ENCODE measurements at regions of chr3 and their contacts with region 1.

Region 1: DNA sequence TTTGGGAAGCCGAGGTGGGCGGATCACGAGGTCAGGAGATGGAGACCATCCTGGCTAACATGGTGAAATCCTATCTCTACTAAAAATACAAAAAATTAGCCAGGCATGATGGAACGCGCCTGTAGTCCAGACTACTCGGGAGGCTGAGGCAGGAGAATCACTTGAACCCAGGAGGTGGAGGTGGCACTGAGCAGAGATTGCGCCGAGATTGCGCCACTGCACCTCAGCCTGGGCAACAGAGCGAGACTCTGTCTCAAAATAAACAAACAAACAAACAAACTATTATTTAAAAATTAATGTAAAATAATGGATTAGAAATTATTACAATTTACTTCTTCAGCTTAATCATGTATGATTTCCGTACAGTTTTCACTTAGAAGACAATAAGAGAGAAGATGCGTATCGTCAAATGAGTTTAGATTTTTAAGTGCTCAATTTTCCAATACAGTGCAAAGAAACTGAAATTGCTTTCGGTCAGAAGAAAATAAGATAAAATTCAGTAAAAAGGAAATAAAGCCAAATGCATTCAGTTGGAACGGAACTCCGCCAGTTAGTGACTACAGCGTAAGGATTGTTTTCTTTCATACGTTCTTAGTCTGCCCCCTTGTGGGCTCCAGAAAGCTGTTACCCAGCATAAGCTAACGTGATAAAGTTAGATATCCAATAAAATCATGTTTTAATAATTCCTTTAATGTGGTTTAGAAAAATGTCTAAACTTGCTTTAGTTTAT is 24.8 kb downstream of the AADAC start:
- DNase-seq: peak; percentile 49 to 60
- H3K4me3 ChIP-seq: no peak overlapping the region
- H3K4me3 Mint-ChIP-seq: no peak overlapping the region
- H3K27ac Mint-ChIP-seq: no peak overlapping the region
- H3K4me1 ChIP-seq: peaks cover 20% of the 10 kb centered on the region
- H3K4me1 Mint-ChIP-seq: peaks cover 15% of the 10 kb centered on the region
- H3K27me3 ChIP-seq: no peaks in the 10 kb centered on the region
- H3K27me3 Mint-ChIP-seq: no peaks in the 10 kb centered on the region
- CTCF ChIP-seq: peak; percentile 66 to 79

Region 2: GRCh38 chr3:151168269-151169094 is 670.3 kb before region 1 on chr3:
- CTCF ChIA-PET with region 1: no interaction called
- POLR2A ChIA-PET with region 1: no interaction called
- intact Hi-C with region 1: loop called (anchors 5 kb)
- DNase-seq: peak; percentile 75 to 84
- H3K4me3 ChIP-seq: no peak overlapping the region
- H3K4me3 Mint-ChIP-seq: no peak overlapping the region
- H3K27ac Mint-ChIP-seq: no peak overlapping the region
- H3K4me1 ChIP-seq: no peaks in the 10 kb centered on the region
- H3K4me1 Mint-ChIP-seq: peaks cover 6% of the 10 kb centered on the region
- H3K27me3 ChIP-seq: no peaks in the 10 kb centered on the region
- H3K27me3 Mint-ChIP-seq: no peaks in the 10 kb centered on the region
- CTCF ChIP-seq: peak; percentile 89 to 94

Region 3: DNA sequence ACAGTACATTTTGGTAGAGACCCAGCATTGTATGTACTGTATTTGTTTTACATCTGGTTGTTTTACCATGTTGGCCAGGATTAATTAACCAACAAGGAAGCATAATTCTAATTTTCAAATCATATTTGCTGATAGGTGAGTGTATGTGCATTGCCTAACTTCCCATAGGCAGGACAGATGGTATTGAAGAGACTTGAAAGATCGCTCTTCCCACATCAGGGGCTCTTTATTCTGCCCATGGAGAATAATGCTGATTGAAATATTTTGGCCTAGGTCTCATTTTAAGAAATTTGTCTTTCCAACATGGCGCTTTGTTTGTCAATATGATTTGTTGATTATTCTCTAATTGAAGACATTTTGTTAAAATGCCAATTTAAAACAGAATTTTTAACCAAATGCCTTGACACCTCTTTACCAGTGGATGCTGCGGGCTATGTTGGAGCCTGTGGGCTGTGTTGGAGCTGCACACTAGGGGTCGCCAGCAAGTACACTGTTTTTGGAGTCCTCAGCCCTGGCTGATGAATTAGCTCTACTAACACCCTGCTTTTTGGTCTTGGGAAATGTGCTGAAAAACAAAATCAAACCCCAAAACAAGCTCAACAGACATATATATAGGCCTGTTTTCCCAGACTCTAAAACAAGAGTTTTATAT is 459.5 kb before region 1 on chr3:
- CTCF ChIA-PET with region 1: interaction called, 3 read pairs
- POLR2A ChIA-PET with region 1: no interaction called
- intact Hi-C with region 1: loop called (anchors 1 kb)
- DNase-seq: peak; percentile 36 to 50
- H3K4me3 ChIP-seq: no peak overlapping the region
- H3K4me3 Mint-ChIP-seq: no peak overlapping the region
- H3K27ac Mint-ChIP-seq: no peak overlapping the region
- H3K4me1 ChIP-seq: no peaks in the 10 kb centered on the region
- H3K4me1 Mint-ChIP-seq: peaks cover 6% of the 10 kb centered on the region
- H3K27me3 ChIP-seq: no peaks in the 10 kb centered on the region
- H3K27me3 Mint-ChIP-seq: no peaks in the 10 kb centered on the region
- CTCF ChIP-seq: peak; percentile 54 to 85

Region 4: DNA sequence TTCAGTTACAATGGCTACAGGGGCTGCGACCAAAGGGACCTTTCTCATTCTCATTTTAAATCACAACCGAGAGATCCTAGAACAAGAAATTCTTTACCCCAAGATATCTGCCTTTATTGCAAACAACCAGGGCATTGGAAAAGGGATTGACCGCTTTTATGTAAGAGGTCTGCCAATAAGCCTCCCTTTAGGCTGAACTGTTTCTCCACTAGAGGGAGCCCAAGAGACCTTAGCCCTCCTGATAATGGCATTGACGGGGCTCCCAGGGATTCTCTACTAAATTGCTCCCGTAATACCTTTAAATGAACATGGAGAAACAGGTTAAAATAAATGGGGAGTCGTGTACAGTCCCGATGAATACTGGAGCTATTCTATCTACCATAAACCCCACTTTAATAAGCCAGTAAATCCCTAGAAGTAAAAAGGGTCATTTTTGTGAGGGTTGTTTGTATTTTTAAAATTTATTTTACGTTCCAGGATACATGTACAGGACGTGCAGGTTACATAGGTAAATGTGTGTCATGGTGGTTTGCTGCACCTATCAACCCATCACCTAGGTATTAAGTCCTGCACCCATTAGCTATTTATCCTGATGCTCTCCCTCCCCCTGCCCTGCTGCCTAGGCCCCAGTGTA is 370.3 kb before region 1 on chr3:
- CTCF ChIA-PET with region 1: interaction called, 8 read pairs
- POLR2A ChIA-PET with region 1: no interaction called
- intact Hi-C with region 1: loop called (anchors 1 kb)
- DNase-seq: peak; percentile 54 to 78
- H3K4me3 ChIP-seq: no peak overlapping the region
- H3K4me3 Mint-ChIP-seq: no peak overlapping the region
- H3K27ac Mint-ChIP-seq: no peak overlapping the region
- H3K4me1 ChIP-seq: no peaks in the 10 kb centered on the region
- H3K4me1 Mint-ChIP-seq: no peaks in the 10 kb centered on the region
- H3K27me3 ChIP-seq: no peaks in the 10 kb centered on the region
- H3K27me3 Mint-ChIP-seq: no peaks in the 10 kb centered on the region
- CTCF ChIP-seq: peak; percentile 77 to 90

Region 5: GRCh38 chr3:151660885-151661284 is 177.9 kb before region 1 on chr3:
- CTCF ChIA-PET with region 1: no interaction called
- POLR2A ChIA-PET with region 1: no interaction called
- intact Hi-C with region 1: loop called (anchors 1 kb)
- DNase-seq: no peak
- H3K4me3 ChIP-seq: no peak overlapping the region
- H3K4me3 Mint-ChIP-seq: no peak overlapping the region
- H3K27ac Mint-ChIP-seq: no peak overlapping the region
- H3K4me1 ChIP-seq: peaks cover 6% of the 10 kb centered on the region; the same call in 1 of the 2 replicates
- H3K4me1 Mint-ChIP-seq: peaks cover 6% of the 10 kb centered on the region
- H3K27me3 ChIP-seq: no peaks in the 10 kb centered on the region
- H3K27me3 Mint-ChIP-seq: no peaks in the 10 kb centered on the region
- CTCF ChIP-seq: peak in 1 of 2 experiments; percentile 16

Region 6: GRCh38 chr3:151770956-151771355 is 67.8 kb before region 1 on chr3:
- CTCF ChIA-PET with region 1: interaction called, 3 read pairs
- POLR2A ChIA-PET with region 1: no interaction called
- intact Hi-C with region 1: loop called (anchors 2 kb)
- DNase-seq: peak in 1 of 2 experiments; percentile 21
- H3K4me3 ChIP-seq: no peak overlapping the region
- H3K4me3 Mint-ChIP-seq: no peak overlapping the region
- H3K27ac Mint-ChIP-seq: no peak overlapping the region
- H3K4me1 ChIP-seq: peaks cover 30% of the 10 kb centered on the region
- H3K4me1 Mint-ChIP-seq: peaks cover 36% of the 10 kb centered on the region
- H3K27me3 ChIP-seq: no peaks in the 10 kb centered on the region
- H3K27me3 Mint-ChIP-seq: no peaks in the 10 kb centered on the region
- CTCF ChIP-seq: no peak

Region 7: GRCh38 chr3:151804267-151804666 is 34.5 kb before region 1 on chr3:
- CTCF ChIA-PET with region 1: no interaction called
- POLR2A ChIA-PET with region 1: no interaction called
- intact Hi-C with region 1: no loop called
- DNase-seq: no peak
- H3K4me3 ChIP-seq: no peak overlapping the region
- H3K4me3 Mint-ChIP-seq: no peak overlapping the region
- H3K27ac Mint-ChIP-seq: no peak overlapping the region
- H3K4me1 ChIP-seq: no peaks in the 10 kb centered on the region
- H3K4me1 Mint-ChIP-seq: no peaks in the 10 kb centered on the region
- H3K27me3 ChIP-seq: no peaks in the 10 kb centered on the region
- H3K27me3 Mint-ChIP-seq: no peaks in the 10 kb centered on the region
- CTCF ChIP-seq: no peak

Region 8: GRCh38 chr3:151816091-151816604 is 22.6 kb before region 1 on chr3:
- CTCF ChIA-PET with region 1: no interaction called
- POLR2A ChIA-PET with region 1: no interaction called
- intact Hi-C with region 1: loop called (anchors 1 kb)
- DNase-seq: peak; percentile 74 to 82
- H3K4me3 ChIP-seq: no peak overlapping the region
- H3K4me3 Mint-ChIP-seq: peak overlapping the region; percentile 65
- H3K27ac Mint-ChIP-seq: peak overlapping the region; percentile 80
- H3K4me1 ChIP-seq: peaks cover 55% of the 10 kb centered on the region
- H3K4me1 Mint-ChIP-seq: peaks cover 35% of the 10 kb centered on the region
- H3K27me3 ChIP-seq: no peaks in the 10 kb centered on the region
- H3K27me3 Mint-ChIP-seq: no peaks in the 10 kb centered on the region
- CTCF ChIP-seq: no peak

Region 9: GRCh38 chr3:152026033-152026556 is 187.3 kb after region 1 on chr3:
- CTCF ChIA-PET with region 1: no interaction called
- POLR2A ChIA-PET with region 1: no interaction called
- intact Hi-C with region 1: no loop called
- DNase-seq: peak in 1 of 2 experiments; percentile 11
- H3K4me3 ChIP-seq: no peak overlapping the region
- H3K4me3 Mint-ChIP-seq: no peak overlapping the region
- H3K27ac Mint-ChIP-seq: no peak overlapping the region
- H3K4me1 ChIP-seq: no peaks in the 10 kb centered on the region
- H3K4me1 Mint-ChIP-seq: no peaks in the 10 kb centered on the region
- H3K27me3 ChIP-seq: no peaks in the 10 kb centered on the region
- H3K27me3 Mint-ChIP-seq: no peaks in the 10 kb centered on the region
- CTCF ChIP-seq: no peak